Mammary epithelial cell (primary cell): ENCODE measurements at regions of chr5 and their contacts with region 1.

Region 1: DNA sequence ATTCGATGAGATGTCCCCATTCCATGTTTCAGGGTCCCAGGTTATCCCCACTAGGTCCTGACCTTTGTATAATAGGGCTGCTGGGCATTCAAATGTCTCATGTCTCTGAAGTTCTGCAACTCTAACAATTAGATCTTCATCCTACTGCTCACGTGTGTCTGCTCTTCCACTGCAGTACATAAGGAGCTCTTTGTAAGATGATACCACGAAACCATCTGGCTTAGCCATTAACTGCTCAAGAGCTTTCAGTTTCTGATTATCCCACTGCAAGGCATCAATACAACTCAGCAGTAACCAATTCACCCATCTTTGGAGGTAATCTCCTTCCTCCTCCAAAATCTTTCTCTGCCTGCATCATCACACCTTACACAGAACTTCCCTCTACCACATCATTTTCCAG is 49.9 kb upstream of the PPP2CA start:
- DNase-seq: no peak
- H3K4me3 ChIP-seq: no peak overlapping the region
- H3K27ac ChIP-seq: no peak overlapping the region
- H3K4me1 ChIP-seq: peaks cover 11% of the 10 kb centered on the region
- H3K27me3 ChIP-seq: no peaks in the 10 kb centered on the region
- CTCF ChIP-seq: no peak

Region 2: DNA sequence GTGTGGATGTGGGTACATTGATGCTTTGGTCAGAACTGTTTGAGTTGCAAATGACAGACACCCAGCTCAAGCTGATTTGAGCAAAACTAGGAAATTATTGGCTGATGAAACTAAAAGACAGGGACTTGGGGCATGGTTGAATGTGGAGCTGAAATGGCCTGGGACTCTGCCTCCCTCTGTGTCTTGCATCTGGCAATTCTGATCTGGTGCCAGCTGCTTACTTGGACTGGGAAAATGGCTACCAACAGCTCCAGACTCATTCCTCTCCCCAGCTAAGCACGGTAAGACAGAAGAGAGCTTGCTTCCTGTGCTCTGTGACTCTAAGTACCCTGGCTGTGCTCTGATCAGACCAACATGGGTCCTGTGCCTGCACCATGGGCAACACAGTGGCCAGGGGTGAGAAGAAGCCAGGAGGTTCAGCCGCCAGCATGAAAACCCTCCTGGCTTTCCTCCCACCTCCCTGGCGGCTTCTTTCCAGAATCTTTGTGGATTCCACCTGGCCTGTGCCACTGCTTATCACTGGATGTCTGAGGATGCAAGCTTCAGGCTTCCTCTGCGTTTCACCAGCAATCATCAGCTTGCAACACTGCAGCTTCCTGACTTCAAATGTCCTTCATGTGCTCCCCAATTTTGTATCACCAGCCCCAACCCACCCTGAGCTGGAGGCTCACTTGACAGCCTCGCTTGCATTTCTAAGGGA is 351.5 kb before region 1 on chr5:
- CTCF ChIA-PET with region 1: no interaction called
- dilution Hi-C with region 1: no loop called
- in situ Hi-C with region 1: no loop called
- intact Hi-C with region 1: no loop called
- DNase-seq: no peak
- H3K4me3 ChIP-seq: no peak overlapping the region
- H3K27ac ChIP-seq: no peak overlapping the region
- H3K4me1 ChIP-seq: no peaks in the 10 kb centered on the region
- H3K27me3 ChIP-seq: peaks cover 2% of the 10 kb centered on the region
- CTCF ChIP-seq: no peak

Region 3: GRCh38 chr5:134176511-134177368 is 99.1 kb before region 1 on chr5 and contains the start of gene SKP1:
- CTCF ChIA-PET with region 1: no interaction called
- dilution Hi-C with region 1: loop called (anchors 5 kb)
- in situ Hi-C with region 1: no loop called
- intact Hi-C with region 1: no loop called
- DNase-seq: peak; percentile 84
- H3K4me3 ChIP-seq: peak within 1 kb of the TSS; percentile 56 to 95 (median 93)
- H3K27ac ChIP-seq: peak within 1 kb of the TSS; percentile 84
- H3K4me1 ChIP-seq: peaks cover 15% of the 10 kb centered on the region
- H3K27me3 ChIP-seq: no peaks in the 10 kb centered on the region
- CTCF ChIP-seq: no peak
- total RNA-seq, gene SKP1: 146 to 231 TPM

Region 4: DNA sequence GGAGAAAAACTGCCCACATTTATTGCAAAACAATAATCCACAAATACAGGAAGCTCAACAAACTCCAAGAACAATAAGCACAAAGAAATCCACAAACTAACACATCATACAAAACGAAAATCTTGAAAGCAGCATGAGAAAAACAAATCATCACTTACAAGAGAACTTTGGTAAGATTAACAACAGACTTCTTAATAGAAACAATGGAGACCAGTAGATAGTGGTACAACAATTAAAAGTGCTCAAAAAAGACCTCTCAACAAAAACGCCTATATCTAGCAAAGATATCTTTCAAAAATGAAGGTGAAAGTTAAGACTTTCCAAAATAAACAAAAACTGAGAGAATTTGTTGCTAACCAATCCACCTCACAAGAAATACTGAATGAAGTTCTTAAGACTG is 52.8 kb after region 1 on chr5:
- CTCF ChIA-PET with region 1: no interaction called
- dilution Hi-C with region 1: loop called (anchors 5 kb)
- in situ Hi-C with region 1: no loop called
- intact Hi-C with region 1: no loop called
- DNase-seq: no peak
- H3K4me3 ChIP-seq: no peak overlapping the region
- H3K27ac ChIP-seq: no peak overlapping the region
- H3K4me1 ChIP-seq: no peaks in the 10 kb centered on the region
- H3K27me3 ChIP-seq: no peaks in the 10 kb centered on the region
- CTCF ChIP-seq: no peak

Region 5: DNA sequence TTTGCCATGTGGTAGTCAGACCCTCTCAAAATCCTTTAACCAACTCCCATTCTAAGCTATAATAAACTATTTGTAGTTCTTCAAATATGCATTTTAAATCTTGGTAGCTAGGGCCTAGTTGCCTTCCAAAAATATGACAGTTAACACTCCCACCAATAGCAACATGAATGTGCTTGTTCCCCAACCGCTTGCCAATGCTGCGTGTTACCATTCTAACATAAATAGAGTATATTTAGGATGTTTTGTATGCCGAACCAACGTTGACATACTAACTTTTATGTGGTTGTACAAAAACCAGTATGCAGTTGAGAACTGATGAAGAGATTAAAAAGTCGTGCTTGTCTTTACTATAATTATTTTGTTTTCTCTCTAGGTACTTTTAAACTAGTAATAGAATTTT is 104.5 kb after region 1 on chr5:
- CTCF ChIA-PET with region 1: no interaction called
- dilution Hi-C with region 1: loop called (anchors 5 kb)
- in situ Hi-C with region 1: no loop called
- intact Hi-C with region 1: no loop called
- DNase-seq: no peak
- H3K4me3 ChIP-seq: no peak overlapping the region
- H3K27ac ChIP-seq: no peak overlapping the region
- H3K4me1 ChIP-seq: no peaks in the 10 kb centered on the region
- H3K27me3 ChIP-seq: no peaks in the 10 kb centered on the region
- CTCF ChIP-seq: no peak